ENCODE measurements at regions of chr15 and their contacts with region 1.

Region 1: DNA sequence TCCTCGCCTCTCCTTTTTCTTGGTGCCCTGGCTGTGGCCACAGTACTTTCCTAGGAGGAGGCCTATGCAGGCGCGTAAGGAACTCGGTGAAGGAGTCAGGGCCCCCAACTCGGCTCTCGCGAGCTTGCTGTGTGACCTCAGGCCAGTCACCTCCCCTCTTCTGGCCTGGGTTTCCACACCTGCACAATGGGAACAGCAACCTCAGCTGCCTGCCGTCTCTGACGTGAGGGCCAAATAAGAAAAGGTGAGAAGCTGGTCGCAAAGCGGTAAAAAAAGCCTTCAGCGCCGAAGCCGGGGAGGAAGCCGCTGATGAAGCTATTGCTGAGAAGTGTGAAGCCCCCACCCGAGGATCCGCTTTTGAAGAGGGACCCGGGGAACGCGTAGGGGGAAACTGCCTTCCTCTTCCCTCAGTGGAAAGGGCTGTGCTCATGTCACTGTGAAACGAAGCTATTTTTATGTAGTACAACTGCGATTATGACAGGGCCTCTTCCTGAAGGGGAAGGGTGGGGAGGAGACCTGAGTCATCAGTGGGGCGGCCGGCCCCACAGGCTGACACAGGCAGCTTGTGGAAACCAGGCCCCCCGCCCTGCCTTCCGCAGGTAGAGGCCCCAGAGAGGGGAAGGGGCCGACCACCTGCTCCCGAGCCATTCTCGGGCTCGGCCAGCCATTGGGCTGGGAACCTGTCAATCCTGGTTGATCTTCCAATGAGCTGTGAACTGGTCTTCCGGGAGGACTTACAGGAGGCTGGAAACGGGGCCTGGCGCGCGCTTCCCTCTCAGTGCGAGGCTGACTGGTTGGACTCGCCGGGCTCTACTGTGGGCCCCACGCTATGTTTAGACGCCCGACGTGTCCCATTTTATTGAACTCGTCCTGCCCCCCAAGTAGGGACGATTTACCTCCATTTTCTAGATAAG is 18.0 kb upstream of the ANKDD1A start:
- DNase-seq: peak; percentile 96
- ATAC-seq: peak; percentile 80
- H3K4me3 Mint-ChIP-seq: peak overlapping the region; percentile 84
- H3K27ac Mint-ChIP-seq: peak overlapping the region; percentile 95
- H3K4me1 Mint-ChIP-seq: peaks cover 53% of the 10 kb centered on the region
- H3K27me3 Mint-ChIP-seq: no peaks in the 10 kb centered on the region

Region 2: GRCh38 chr15:64767203-64767602 is 126.5 kb before region 1 on chr15:
- POLR2A ChIA-PET with region 1: no interaction called
- DNase-seq: no peak
- ATAC-seq: no peak
- H3K4me3 Mint-ChIP-seq: no peak overlapping the region
- H3K27ac Mint-ChIP-seq: no peak overlapping the region
- H3K4me1 Mint-ChIP-seq: peaks cover 4% of the 10 kb centered on the region
- H3K27me3 Mint-ChIP-seq: peaks cover 10% of the 10 kb centered on the region

Region 3: DNA sequence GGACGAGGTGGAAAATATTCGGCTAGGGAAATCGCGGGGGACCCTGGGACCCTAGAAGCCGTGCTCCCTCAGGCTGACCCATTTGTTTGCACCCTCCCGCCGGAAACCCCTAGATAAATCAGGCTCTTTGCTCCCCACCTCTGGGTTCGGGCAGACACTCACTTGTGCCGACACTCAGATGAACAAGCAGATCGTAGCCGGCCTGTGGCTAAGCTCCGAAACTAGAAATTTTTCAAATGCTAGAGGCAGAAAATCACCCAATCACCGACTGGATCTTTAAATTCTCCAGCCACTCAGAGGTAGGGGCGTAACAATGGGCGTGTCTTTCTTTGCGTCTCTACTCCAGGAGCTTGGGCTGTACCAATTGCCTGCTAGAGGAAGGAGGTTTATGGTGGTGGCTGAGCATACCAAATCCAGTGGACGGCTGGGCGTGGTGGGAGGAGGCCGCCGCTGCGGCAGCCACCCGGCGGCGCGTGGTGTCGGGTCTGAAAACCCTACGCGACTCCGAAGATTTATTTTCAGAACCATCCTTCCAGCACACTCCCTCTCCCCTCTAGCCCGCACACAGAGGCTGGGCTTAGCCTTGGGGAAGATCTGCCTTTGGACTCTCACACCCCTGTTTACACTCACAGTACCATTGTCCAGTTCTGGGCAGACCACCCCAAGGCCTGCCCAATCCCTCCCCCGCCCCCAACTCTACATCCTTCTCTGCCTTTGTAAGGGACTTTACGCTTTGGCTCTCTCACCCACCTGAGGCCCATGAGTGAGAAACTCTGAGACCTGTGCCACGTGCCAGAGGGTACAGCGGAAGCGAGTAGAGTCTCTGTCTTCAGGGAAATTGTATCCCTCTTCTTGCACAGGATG is 68.1 kb before region 1 on chr15 and contains the start of gene PIF1:
- POLR2A ChIA-PET with region 1: interaction called, 35 read pairs
- DNase-seq: peak; percentile 80
- ATAC-seq: peak; percentile 92
- H3K4me3 Mint-ChIP-seq: peak within 1 kb of the TSS; percentile 97
- H3K27ac Mint-ChIP-seq: peak within 1 kb of the TSS; percentile 93
- H3K4me1 Mint-ChIP-seq: peaks cover 29% of the 10 kb centered on the region
- H3K27me3 Mint-ChIP-seq: no peaks in the 10 kb centered on the region
- total RNA-seq, gene PIF1: 45.8 to 49.7 TPM

Region 4: DNA sequence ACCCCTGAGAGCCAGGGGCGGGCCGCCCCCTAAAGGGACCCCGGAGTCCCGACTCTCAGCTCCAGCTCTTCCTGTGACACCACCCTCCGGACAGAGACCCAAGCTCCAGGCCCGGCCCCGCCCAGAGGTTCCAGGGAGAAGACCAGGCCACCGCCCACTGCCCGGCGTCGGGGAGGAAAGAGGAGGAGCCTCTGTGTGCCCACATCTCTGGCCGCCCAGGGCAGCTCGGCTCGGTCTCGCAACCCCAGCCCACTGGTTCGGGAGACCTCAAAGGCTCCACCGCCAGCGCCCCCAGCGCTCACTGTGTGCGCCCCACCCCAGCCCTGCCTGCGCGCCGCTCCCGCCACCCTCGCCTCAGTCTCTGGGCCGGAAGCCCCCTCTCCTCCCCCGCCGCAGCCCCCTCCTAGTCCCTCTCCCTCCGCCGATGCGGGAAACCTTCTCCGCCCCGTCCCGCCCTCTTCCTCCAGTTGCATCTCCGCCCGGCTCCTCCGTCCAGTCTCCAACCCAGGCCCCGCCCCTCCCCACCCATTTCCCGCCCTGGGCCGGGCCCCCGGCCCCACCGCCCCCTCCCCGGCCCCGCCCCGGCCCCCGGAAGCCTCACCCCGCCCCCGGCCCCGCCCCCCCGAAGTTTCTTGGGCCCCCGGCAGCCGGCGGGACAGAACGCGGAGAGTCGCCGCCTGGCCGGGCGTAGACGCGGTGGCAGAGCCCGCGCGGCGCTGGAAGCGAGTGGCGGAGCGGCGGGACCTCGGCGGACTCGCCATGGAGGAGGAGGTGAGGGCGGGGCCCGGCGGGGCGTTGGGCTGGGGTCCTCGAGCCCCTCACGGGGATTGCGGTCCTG is 52.3 kb before region 1 on chr15 and contains the start of gene PLEKHO2:
- POLR2A ChIA-PET with region 1: interaction called, 86 read pairs
- DNase-seq: peak; percentile 90
- ATAC-seq: peak; percentile 78
- H3K4me3 Mint-ChIP-seq: peak within 1 kb of the TSS; percentile 94
- H3K27ac Mint-ChIP-seq: peak within 1 kb of the TSS; percentile 89
- H3K4me1 Mint-ChIP-seq: peaks cover 57% of the 10 kb centered on the region
- H3K27me3 Mint-ChIP-seq: no peaks in the 10 kb centered on the region
- total RNA-seq, gene PLEKHO2: 25.4 to 25.7 TPM

Region 5: DNA sequence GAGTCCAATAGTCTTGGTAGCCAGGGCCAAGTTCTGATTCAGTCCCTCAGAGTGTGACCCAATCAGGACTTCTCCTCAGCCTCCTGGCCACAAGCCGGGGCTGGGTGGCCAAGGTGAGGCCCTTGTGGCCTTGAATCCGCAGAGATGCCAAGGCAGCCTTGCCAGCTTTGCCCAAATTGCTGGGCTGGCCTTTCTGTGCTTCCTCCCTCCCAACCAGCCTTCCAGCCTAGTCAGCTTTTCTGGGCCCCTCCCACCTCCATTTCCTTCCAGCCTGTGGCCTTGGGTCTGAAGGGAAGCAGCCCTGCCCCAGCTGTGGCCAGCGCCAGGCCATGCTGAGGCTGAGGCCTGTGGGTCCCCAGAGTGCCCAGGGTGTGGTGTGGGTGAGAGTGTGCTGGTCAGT is 16.3 kb before region 1 on chr15:
- POLR2A ChIA-PET with region 1: interaction called, 57 read pairs
- DNase-seq: no peak
- ATAC-seq: peak; percentile 21
- H3K4me3 Mint-ChIP-seq: no peak overlapping the region
- H3K27ac Mint-ChIP-seq: no peak overlapping the region
- H3K4me1 Mint-ChIP-seq: peaks cover 24% of the 10 kb centered on the region
- H3K27me3 Mint-ChIP-seq: no peaks in the 10 kb centered on the region

Region 6: DNA sequence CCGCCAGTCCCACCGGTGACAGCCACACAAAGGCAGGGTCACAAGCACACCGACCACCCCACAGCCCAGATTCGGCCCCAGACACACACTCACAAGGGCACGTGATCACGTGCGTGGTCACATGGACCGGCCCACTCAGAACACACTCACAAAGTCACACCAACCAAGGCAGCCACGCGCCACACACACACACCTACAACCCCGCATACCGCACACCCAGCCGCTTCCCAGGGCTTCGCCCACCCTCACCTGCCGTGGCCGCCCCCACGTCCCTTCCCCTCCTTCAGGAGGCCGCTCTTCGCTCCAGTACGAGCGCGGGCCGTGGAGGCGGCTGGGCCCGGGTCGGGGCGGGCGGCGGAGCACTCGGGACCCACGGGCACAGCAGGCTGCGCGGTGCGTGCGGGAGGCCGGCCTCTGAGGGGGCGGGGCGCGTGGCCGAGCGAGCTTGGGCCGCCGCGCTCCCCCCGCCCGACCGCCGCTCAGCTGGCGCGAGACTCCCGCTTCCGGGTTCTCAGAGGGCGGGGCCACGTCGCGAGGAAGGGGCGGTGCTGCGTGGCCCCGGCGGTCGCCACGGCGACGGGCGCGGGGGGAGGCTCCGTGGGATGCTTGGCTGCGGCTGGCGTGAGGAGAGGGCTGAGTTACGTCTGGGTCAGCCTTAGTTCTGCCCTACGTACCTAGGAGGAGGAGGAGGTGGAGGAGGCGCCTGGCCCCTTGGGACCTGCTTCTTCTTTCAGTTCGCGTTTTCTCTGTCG is 95.9 kb after region 1 on chr15 and contains the start of gene SPG21:
- POLR2A ChIA-PET with region 1: interaction called, 10 read pairs
- DNase-seq: peak; percentile 97
- ATAC-seq: peak; percentile 94
- H3K4me3 Mint-ChIP-seq: peak within 1 kb of the TSS; percentile 94
- H3K27ac Mint-ChIP-seq: peak within 1 kb of the TSS; percentile 90
- H3K4me1 Mint-ChIP-seq: peaks cover 37% of the 10 kb centered on the region
- H3K27me3 Mint-ChIP-seq: no peaks in the 10 kb centered on the region
- total RNA-seq, gene SPG21: 55.1 to 57.0 TPM